Thyroid gland (tissue), 4 donors: ENCODE measurements at regions of chr19 and their contacts with region 1.

Region 1: GRCh38 chr19:52391135-52391534 is 6.5 kb upstream of the ZNF528 start:
- DNase-seq: no peak
- H3K4me3 ChIP-seq: no peak overlapping the region
- H3K27ac ChIP-seq: no peak overlapping the region
- H3K4me1 ChIP-seq: no peaks in the 10 kb centered on the region
- H3K27me3 ChIP-seq: no peaks in the 10 kb centered on the region
- CTCF ChIP-seq: no peak
- POLR2A ChIP-seq: no peak

Region 2: GRCh38 chr19:52148256-52148655 is 242.9 kb before region 1 on chr19:
- intact Hi-C with region 1: no loop called
- DNase-seq: no peak
- H3K4me3 ChIP-seq: no peak overlapping the region
- H3K27ac ChIP-seq: no peak overlapping the region
- H3K4me1 ChIP-seq: no peaks in the 10 kb centered on the region
- H3K27me3 ChIP-seq: no peaks in the 10 kb centered on the region
- CTCF ChIP-seq: no peak
- POLR2A ChIP-seq: no peak

Region 3: DNA sequence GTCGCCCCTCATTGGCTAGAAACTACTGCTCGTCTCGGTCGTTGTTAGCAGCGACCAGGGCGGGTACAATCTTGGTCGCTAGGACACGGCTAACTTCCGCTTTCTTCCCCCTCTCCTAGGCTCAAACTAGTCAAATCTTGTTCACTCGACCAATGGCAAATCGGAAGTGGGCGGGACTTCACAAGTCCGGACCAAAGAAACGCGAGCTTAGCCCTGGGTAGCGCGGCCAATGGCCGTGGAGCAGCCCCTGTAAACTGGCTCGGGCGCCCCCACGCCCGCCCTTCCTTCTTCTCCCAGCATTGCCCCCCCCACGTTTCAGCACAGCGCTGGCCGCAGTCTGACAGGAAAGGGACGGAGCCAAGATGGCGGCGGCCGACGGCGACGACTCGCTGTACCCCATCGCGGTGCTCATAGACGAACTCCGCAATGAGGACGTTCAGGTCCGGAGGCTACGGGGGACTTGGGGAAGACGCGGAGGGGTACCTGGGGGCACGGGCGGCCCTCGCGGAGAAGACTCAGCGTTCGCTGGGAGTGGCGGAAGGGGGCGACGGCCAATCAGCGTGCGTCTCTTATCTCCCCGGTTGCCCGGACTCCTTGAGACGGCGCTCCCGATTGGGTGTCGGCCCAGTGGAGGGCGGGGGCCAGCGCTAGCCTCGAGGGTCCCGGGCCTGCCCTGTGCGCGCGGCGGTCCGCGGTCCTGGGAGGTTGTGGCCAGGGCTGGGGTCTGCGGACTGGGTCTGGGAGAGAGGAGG is 201.2 kb before region 1 on chr19 and contains the start of gene PPP2R1A:
- intact Hi-C with region 1: no loop called
- DNase-seq: peak; percentile 100
- H3K4me3 ChIP-seq: peak within 1 kb of the TSS; percentile 84 to 91 (median 84)
- H3K27ac ChIP-seq: peak within 1 kb of the TSS; percentile 93 to 99 (median 96)
- H3K4me1 ChIP-seq: peaks cover 25 to 33% of the 10 kb centered on the region in 2 donors
- H3K27me3 ChIP-seq: no peaks in the 10 kb centered on the region
- CTCF ChIP-seq: no peak
- POLR2A ChIP-seq: peak in 1 of 2 donors; percentile 68
- total RNA-seq, gene PPP2R1A: 120 to 272 (median 258) TPM

Region 4: DNA sequence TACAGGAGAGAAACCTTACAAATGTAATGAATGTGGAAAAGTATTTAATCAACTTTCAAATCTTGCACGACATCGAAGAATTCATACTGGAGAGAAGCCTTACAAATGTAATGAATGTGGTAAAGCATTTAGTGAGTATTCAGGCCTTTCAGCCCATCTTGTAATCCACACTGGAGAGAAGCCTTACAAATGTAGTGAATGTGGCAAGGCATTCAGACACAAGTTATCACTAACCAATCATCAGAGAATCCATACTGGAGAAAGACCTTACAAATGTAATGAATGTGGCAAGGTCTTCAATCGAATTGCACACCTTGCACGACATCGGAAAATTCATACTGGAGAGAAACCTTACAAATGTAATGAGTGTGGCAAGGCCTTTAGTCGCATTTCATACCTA is 68.7 kb before region 1 on chr19:
- intact Hi-C with region 1: loop called (anchors 10 kb)
- DNase-seq: no peak
- H3K4me3 ChIP-seq: no peak overlapping the region
- H3K27ac ChIP-seq: no peak overlapping the region
- H3K4me1 ChIP-seq: no peaks in the 10 kb centered on the region
- H3K27me3 ChIP-seq: no peaks in the 10 kb centered on the region
- CTCF ChIP-seq: no peak
- POLR2A ChIP-seq: no peak

Region 5: DNA sequence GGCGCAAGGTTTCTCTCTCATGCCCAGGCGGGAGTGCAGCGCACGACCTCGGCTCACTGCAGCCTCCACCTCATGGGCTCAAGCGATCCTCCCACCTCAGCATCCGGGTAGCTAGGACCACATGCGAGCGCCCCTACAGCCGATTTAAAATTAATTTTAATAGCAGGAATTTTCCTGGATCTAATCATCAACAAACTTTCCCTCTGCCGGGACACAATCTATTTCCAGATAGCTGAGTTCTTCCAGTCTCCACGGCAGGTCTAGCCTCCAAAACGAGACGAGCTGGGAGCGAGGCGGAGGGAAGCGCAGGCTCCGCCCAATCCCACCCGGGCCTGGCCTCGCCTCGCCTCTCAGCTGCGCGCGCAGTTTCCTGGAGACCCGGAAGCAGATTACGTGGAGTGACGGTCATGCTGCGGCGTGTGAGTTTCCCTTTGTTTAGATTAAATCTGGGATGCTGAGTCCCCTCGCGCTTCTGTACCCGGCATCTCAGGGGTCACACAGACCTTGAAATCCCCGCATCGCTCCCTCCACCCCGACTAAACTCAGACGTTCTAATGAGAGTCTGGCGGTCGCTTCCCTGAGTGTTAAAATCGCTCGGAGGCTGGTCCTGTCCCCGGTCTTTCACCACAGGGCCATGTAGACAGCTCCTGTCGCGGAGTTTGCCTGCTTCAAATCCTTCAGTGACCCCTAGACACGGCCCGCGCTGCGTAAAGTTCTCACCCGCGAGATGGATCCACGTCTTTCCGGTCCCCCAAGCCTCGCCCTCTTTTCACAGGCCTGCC is 21.4 kb before region 1 on chr19 and contains the start of gene ZNF880:
- intact Hi-C with region 1: no loop called
- DNase-seq: peak; percentile 95 to 97
- H3K4me3 ChIP-seq: peak within 1 kb of the TSS; percentile 67 to 89 (median 83)
- H3K27ac ChIP-seq: peak within 1 kb of the TSS; percentile 81 to 94 (median 88)
- H3K4me1 ChIP-seq: peaks cover 6 to 12% of the 10 kb centered on the region in 2 donors
- H3K27me3 ChIP-seq: no peaks in the 10 kb centered on the region
- CTCF ChIP-seq: peak in 1 of 6 experiments; percentile 24
- POLR2A ChIP-seq: peak in 1 of 2 donors; percentile 66
- total RNA-seq, gene ZNF880: 31.1 to 49.4 (median 36.7) TPM

Region 6: DNA sequence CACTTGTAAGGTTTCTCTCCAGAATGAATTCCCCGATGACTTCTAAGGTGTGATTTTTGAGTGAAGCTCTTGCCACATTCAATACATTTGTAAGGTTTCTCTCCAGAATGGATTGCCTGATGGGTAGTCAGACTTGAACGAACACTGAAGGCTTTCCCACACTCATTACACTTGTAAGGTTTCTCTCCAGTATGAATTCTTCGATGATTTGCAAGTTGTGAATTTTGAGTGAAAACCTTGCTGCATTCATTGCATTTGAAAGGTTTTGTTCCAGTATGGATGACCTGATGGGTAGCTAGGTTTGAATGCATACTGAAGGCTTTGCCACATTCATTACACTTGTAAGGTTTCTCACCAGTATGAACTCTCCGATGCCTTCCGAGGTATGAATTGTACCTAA is 677.7 kb after region 1 on chr19:
- intact Hi-C with region 1: no loop called
- DNase-seq: no peak
- H3K4me3 ChIP-seq: no peak overlapping the region
- H3K27ac ChIP-seq: no peak overlapping the region
- H3K4me1 ChIP-seq: no peaks in the 10 kb centered on the region
- H3K27me3 ChIP-seq: no peaks in the 10 kb centered on the region
- CTCF ChIP-seq: no peak
- POLR2A ChIP-seq: no peak